ENCODE measurements at regions of chr5 and their contacts with region 1.

Region 1: DNA sequence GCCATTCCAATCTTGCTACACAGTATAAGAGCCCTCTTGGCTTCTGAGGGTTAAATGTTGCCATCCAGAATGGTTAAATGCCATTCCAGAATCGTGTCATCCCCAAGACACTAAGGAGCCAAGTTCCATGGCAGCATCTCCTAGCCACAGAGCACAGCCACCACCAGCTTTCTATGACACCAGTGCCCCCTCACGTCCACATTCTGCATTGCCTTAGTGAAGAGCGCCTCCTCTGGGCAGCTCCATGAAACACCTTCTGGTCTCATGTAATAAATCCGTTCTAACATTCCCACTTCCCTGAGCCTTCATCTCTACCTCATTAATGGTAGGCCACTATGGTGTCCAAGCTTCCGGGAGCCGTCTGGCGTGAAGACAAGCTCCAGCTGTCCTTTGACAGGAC is 12.4 kb downstream of the CBY3 start:
- DNase-seq: peak; percentile 51
- CTCF ChIP-seq: peak; percentile 65

Region 2: GRCh38 chr5:179166886-179167841 is 501.2 kb before region 1 on chr5:
- CTCF ChIA-PET with region 1: interaction called, 11 read pairs
- POLR2A ChIA-PET with region 1: no interaction called
- DNase-seq: peak; percentile 72
- CTCF ChIP-seq: peak; percentile 50

Region 3: DNA sequence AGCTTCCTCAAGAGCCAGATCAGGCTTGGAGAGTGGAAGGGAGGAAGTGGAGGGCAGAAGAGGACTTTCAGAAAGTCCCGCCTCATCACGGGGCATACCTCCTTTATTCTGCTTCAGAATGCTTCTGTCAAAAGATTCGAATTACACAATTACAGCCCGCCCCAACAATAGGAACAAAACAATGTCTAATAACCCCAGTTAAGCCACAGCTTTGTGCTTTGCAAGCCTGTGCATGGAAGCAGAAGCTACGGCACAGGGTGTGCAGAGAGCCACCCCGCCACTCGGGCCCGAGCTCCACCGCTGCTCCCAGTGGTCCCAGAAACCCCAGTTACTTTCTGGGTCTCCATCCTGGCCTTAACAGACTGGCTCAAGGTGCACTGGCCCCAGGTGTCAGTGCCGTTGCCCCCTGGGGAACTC is 68.4 kb before region 1 on chr5:
- CTCF ChIA-PET with region 1: no interaction called
- POLR2A ChIA-PET with region 1: no interaction called
- DNase-seq: no peak
- CTCF ChIP-seq: no peak